ENCODE measurements at regions of chr22 and their contacts with region 1.

Region 1: GRCh38 chr22:41237707-41238569 is 2.8 kb downstream of the CHADL start:
- DNase-seq: peak; percentile 89
- H3K4me3 Mint-ChIP-seq: peak overlapping the region; percentile 61
- H3K27ac Mint-ChIP-seq: no peak overlapping the region
- H3K4me1 Mint-ChIP-seq: peaks cover 7% of the 10 kb centered on the region
- H3K27me3 Mint-ChIP-seq: peaks cover 4% of the 10 kb centered on the region

Region 2: GRCh38 chr22:40922484-40923303 is 315.2 kb before region 1 on chr22:
- CTCF ChIA-PET with region 1: interaction called, 142 read pairs
- POLR2A ChIA-PET with region 1: interaction called, 22 read pairs
- DNase-seq: no peak
- H3K4me3 Mint-ChIP-seq: no peak overlapping the region
- H3K27ac Mint-ChIP-seq: peak overlapping the region; percentile 31
- H3K4me1 Mint-ChIP-seq: peaks cover 4% of the 10 kb centered on the region
- H3K27me3 Mint-ChIP-seq: no peaks in the 10 kb centered on the region

Region 3: DNA sequence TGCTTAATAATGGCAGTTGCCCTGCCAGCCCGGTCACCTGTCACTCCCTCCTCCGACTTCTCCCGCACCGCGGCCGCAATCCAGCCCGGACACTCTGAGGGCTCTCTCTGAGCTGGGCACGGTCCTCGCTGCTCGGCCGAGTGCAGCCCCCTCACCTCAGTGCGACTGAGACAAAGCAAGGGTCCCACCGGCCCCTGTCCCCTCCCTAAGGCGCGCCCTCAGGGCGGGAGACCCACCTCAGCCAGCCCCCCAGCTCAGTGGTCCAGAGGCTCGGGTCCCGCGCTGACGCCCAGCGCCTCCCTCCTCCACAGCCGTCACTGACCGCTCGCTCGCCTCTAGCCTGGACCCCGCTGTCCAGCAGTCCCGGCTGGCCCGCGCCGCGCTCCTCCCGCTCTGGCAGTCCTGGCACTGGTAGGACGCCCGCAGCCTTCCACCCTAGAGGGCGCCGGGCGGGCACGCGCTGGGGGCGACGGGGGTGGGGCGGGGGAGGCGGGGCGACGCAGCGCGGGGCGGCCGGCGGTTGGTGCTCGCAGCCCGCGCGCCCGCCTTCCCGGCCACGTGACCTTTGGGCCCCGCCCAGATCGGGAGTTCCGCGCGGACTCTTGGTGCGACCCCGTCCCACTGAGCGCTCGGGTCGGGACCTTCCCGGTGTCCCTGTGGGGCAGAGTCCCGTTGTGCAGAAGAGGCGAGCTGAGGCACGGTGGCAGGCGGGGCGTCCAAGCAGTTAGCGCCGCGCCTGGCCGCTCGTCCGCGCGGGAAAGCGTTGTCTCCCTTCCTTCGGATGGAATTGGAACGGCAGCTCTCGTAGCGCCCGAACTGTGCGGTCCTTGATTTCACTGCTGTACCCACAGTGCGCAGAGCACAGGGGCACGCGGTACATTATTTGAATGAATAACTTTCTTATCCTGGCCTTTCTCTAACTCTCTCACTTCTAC is 40.6 kb before region 1 on chr22:
- CTCF ChIA-PET with region 1: interaction called, 24 read pairs
- POLR2A ChIA-PET with region 1: interaction called, 14 read pairs
- DNase-seq: peak; percentile 81
- H3K4me3 Mint-ChIP-seq: peak overlapping the region; percentile 83
- H3K27ac Mint-ChIP-seq: no peak overlapping the region
- H3K4me1 Mint-ChIP-seq: peaks cover 14% of the 10 kb centered on the region
- H3K27me3 Mint-ChIP-seq: peaks cover 26% of the 10 kb centered on the region

Region 4: DNA sequence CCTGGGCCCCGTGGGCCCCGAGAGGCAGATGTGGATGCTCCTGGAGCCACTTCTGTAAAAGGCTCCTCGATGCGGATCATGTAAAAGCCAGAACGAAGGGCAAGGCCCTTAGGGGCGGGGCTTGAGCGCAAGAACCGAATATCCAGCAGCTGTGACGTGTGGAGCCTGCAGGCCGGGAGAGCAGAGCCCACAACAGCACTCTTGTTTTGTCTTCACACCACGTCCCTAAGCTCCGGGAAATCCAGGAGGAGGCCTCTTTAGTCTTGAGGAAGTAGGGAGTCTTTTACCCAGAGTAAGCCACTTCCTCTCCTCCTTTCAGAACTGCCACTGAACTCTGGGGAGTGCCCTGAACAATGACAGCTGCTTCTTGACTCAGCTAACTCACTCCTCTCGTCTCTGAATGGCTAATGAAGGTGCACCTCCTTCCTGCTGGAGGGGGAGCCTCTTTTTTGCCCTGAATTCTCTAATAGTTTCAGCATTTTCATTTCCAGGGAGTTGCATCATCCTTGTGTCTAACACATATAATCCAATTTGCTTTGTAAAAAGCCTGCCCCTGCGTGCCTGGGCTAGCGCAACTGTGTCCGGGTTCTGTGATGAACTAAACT is 20.3 kb before region 1 on chr22:
- CTCF ChIA-PET with region 1: interaction called, 11 read pairs
- POLR2A ChIA-PET with region 1: interaction called, 18 read pairs
- DNase-seq: peak; percentile 66
- H3K4me3 Mint-ChIP-seq: peak overlapping the region; percentile 67
- H3K27ac Mint-ChIP-seq: peak overlapping the region; percentile 86
- H3K4me1 Mint-ChIP-seq: peaks cover 35% of the 10 kb centered on the region
- H3K27me3 Mint-ChIP-seq: no peaks in the 10 kb centered on the region

Region 5: DNA sequence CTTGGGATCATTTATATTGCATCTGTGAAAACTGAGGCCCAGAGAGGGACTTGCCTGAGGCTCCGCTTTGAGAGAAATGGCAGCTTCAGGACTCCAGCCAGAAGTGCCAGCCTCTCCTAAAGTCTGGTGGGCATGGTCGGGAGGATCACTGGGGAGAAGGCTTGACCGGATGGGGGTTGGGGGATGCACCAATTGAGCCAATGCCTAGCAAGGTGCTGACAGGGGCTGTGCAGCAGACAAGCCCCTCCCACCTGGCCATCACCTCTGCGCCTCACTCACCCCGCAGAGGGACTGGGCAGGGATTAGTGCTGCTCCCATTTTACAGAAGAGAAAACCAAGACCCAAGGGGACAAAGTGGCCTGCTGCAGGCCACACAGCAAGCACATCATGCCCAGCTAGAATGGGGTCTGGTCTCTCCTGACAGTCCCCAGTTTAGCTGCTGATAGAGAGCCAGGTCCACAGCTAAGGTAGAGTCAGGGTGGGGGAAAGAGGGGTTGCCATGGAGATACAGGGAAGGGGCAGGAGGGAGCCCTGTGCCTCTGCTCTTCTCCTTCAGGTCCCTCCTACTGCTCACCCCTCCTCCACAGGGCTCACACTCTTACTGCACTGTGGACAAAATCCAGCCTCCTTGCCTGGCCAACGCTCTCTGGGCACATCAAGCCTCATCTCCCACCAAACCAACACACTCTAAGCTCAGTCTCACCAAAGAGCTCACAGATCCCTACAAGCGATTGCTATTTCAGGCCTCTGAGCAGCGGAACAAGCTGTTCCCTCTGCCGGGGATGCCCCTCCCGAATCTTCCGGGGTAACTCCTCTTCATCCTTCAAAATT is 173.3 kb after region 1 on chr22:
- CTCF ChIA-PET with region 1: no interaction called
- POLR2A ChIA-PET with region 1: no interaction called
- DNase-seq: no peak
- H3K4me3 Mint-ChIP-seq: peak overlapping the region; percentile 18
- H3K27ac Mint-ChIP-seq: peak overlapping the region; percentile 52
- H3K4me1 Mint-ChIP-seq: peaks cover 30% of the 10 kb centered on the region
- H3K27me3 Mint-ChIP-seq: no peaks in the 10 kb centered on the region

Measured in activated CD4-positive, alpha-beta memory T cell treated with anti-CD3 and anti-CD28 coated beads, Interleukin-2, amount 10 ng/mL, durations not matched to agents 7 days and 5 days (primary cell).